CD4-positive, alpha-beta T cell (primary cell): ENCODE measurements at regions of chr2 and their contacts with region 1.

Region 1: DNA sequence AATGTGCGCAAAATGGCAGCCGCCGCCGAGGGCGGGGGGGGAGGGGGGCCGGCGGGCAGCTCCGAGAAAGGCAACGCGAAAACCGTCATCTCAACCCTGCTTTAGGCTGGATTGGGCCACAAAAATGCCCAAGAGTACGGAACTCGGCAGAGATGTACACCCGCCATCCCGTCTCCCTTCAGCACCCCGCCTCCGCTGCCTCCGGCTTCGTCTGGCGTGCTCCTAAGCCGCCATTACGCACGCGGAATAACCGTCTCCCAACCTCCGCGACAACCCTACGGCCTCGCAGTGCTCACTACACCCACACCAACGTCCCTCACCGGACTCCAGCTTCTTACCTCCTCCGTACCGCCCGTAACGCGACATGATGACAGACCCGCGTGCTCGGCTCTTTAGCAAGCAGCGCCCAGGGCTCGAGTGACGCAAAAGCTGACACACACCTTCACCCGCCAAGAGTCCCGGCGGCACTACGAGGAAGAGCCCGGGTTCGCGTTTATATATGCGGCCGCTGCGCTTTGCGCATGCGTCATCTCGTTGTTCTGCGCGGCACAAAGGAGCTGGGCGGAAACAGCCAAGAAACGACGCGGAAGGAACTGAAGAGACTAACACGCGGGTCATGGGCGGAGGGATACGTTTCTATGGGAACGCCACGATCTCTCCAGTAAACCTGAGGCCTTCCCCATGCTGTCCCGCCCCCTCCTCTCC is at the start of gene SRSF7:
- DNase-seq: peak; percentile 96 to 100 (median 99)
- ATAC-seq: peak; percentile 77
- H3K4me3 ChIP-seq: peak within 1 kb of the TSS; percentile 92
- H3K4me3 Mint-ChIP-seq: peak within 1 kb of the TSS; percentile 99
- H3K27ac ChIP-seq: peak within 1 kb of the TSS; percentile 97
- H3K27ac Mint-ChIP-seq: peak within 1 kb of the TSS; percentile 94
- H3K4me1 ChIP-seq: peaks cover 42% of the 10 kb centered on the region
- H3K4me1 Mint-ChIP-seq: peaks cover 63% of the 10 kb centered on the region
- H3K27me3 ChIP-seq: no peaks in the 10 kb centered on the region
- H3K27me3 Mint-ChIP-seq: peaks cover 4% of the 10 kb centered on the region
- CTCF ChIP-seq: no peak
- total RNA-seq, gene SRSF7: 550 to 557 TPM

Region 2: DNA sequence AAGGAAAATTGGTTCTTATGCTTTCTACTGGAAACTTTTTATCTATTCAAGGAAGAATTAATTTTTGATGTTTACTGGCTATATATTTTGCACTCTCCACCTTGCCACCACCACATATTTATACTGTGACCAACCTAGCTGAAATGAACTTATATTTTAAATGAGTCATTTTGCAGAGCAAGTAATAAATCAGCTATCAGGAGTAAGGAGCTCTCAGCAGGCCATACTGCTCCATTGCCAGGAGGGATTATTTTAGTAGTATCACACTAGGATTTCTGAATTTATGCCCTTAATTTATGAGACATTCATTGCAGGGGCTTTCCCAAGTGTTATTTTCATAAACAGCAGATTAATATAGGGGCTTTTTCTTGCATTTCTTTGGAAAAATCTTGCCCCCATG is 549.3 kb before region 1 on chr2:
- CTCF ChIA-PET with region 1: no interaction called
- POLR2A ChIA-PET with region 1: no interaction called
- intact Hi-C with region 1: no loop called
- DNase-seq: no peak
- ATAC-seq: no peak
- H3K4me3 ChIP-seq: no peak overlapping the region
- H3K4me3 Mint-ChIP-seq: no peak overlapping the region
- H3K27ac ChIP-seq: no peak overlapping the region
- H3K27ac Mint-ChIP-seq: no peak overlapping the region
- H3K4me1 ChIP-seq: no peaks in the 10 kb centered on the region
- H3K4me1 Mint-ChIP-seq: no peaks in the 10 kb centered on the region
- H3K27me3 ChIP-seq: peaks cover 4 to 11% of the 10 kb centered on the region in 2 experiments
- H3K27me3 Mint-ChIP-seq: peaks cover 33% of the 10 kb centered on the region
- CTCF ChIP-seq: no peak

Region 3: GRCh38 chr2:38535744-38536506 is 215.1 kb before region 1 on chr2:
- CTCF ChIA-PET with region 1: no interaction called
- POLR2A ChIA-PET with region 1: interaction called, 10 read pairs
- intact Hi-C with region 1: no loop called
- DNase-seq: peak; percentile 55 to 90 (median 76)
- ATAC-seq: peak; percentile 96
- H3K4me3 ChIP-seq: peak overlapping the region; percentile 44
- H3K4me3 Mint-ChIP-seq: no peak overlapping the region
- H3K27ac ChIP-seq: no peak overlapping the region
- H3K27ac Mint-ChIP-seq: no peak overlapping the region
- H3K4me1 ChIP-seq: peaks cover 14% of the 10 kb centered on the region
- H3K4me1 Mint-ChIP-seq: no peaks in the 10 kb centered on the region
- H3K27me3 ChIP-seq: no peaks in the 10 kb centered on the region
- H3K27me3 Mint-ChIP-seq: peaks cover 7% of the 10 kb centered on the region
- CTCF ChIP-seq: peak; percentile 93

Region 4: GRCh38 chr2:38596229-38596628 is 154.8 kb before region 1 on chr2:
- CTCF ChIA-PET with region 1: interaction called, 3 read pairs
- POLR2A ChIA-PET with region 1: interaction called, 136 read pairs
- intact Hi-C with region 1: no loop called
- DNase-seq: peak in 1 of 14 experiments; percentile 16
- ATAC-seq: no peak
- H3K4me3 ChIP-seq: peak overlapping the region; percentile 62
- H3K4me3 Mint-ChIP-seq: peak overlapping the region; percentile 42
- H3K27ac ChIP-seq: peak overlapping the region; percentile 19 to 24
- H3K27ac Mint-ChIP-seq: peak overlapping the region; percentile 76
- H3K4me1 ChIP-seq: peaks cover 30% of the 10 kb centered on the region
- H3K4me1 Mint-ChIP-seq: peaks cover 66% of the 10 kb centered on the region
- H3K27me3 ChIP-seq: no peaks in the 10 kb centered on the region
- H3K27me3 Mint-ChIP-seq: no peaks in the 10 kb centered on the region
- CTCF ChIP-seq: no peak

Region 5: DNA sequence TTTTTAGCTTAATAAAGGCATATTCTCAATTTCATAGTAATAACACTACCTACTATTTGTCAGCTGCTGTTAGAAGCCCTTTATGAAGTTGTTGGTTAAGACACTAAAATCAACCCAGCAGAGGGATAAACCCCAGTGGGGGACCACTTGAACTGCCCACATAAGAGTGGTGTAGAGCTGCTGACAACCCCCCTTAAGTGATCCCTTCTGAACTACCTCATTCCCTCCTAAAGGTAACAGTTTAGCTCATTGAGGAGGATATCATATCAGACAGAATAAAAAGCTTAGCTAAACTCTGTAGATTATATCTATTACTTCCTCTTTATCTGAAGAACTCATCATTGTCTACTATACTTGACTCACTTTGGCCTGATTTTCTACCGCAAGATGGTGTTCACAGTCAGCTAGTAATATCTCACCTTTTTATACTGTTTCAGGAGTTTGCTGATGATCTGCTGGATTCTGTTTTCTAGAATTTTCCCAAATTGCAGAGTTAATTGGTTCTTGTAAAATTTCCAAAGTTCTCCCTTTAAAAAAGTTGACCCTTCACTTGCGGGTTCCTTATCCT is 69.0 kb before region 1 on chr2:
- CTCF ChIA-PET with region 1: interaction called, 4 read pairs
- POLR2A ChIA-PET with region 1: interaction called, 19 read pairs
- intact Hi-C with region 1: no loop called
- DNase-seq: peak in 4 of 14 experiments; percentile 28 to 82 (median 76)
- ATAC-seq: peak; percentile 88
- H3K4me3 ChIP-seq: peak overlapping the region; percentile 31
- H3K4me3 Mint-ChIP-seq: peak overlapping the region; percentile 49
- H3K27ac ChIP-seq: peak overlapping the region; percentile 71 to 78
- H3K27ac Mint-ChIP-seq: peak overlapping the region; percentile 86
- H3K4me1 ChIP-seq: peaks cover 55% of the 10 kb centered on the region
- H3K4me1 Mint-ChIP-seq: peaks cover 50% of the 10 kb centered on the region
- H3K27me3 ChIP-seq: no peaks in the 10 kb centered on the region
- H3K27me3 Mint-ChIP-seq: no peaks in the 10 kb centered on the region
- CTCF ChIP-seq: peak; percentile 23

Region 6: DNA sequence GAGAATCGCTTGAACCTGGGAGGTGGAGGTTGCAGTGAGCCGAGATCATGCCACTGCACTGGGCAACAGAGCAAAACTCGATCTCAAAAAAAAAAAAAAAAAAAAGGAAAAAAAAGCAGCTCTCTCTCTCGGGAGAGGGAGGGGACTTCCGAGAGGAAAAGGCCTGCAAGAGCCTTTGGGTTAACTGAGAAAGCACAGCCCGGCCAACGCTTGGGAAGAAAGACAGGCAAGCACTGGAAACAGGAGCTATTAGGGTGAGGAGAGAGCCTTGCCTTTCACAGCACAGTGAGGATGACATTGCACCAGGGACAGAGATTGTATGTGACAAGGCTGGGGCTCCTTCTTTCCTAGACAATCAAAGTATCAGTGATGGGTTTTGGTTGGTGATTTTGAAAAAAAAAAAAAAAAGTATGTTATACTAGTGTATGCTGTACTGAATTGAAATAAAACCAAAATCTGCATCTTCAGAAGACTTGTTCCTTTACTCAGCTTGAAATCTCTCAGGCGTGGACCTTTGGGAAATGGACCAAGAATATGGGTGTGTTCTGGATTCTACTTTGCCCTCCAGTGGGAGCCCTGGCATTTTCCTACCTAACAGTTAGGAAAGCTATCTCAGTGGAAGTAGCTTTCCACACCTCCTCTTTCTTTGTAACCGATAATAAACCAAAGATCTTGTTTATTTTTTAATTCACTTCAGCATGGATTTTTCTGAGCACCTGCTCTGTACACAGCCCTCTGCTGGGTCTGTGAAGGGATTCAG is 16.6 kb before region 1 on chr2:
- CTCF ChIA-PET with region 1: no interaction called
- POLR2A ChIA-PET with region 1: interaction called, 66 read pairs
- intact Hi-C with region 1: no loop called
- DNase-seq: peak in 1 of 14 experiments; percentile 9
- ATAC-seq: no peak
- H3K4me3 ChIP-seq: no peak overlapping the region
- H3K4me3 Mint-ChIP-seq: no peak overlapping the region
- H3K27ac ChIP-seq: no peak overlapping the region
- H3K27ac Mint-ChIP-seq: no peak overlapping the region
- H3K4me1 ChIP-seq: no peaks in the 10 kb centered on the region
- H3K4me1 Mint-ChIP-seq: peaks cover 20% of the 10 kb centered on the region
- H3K27me3 ChIP-seq: no peaks in the 10 kb centered on the region
- H3K27me3 Mint-ChIP-seq: no peaks in the 10 kb centered on the region
- CTCF ChIP-seq: no peak

Region 7: GRCh38 chr2:38875576-38876367 is 124.7 kb after region 1 on chr2 and contains the starts of genes DHX57 and MORN2:
- CTCF ChIA-PET with region 1: no interaction called
- POLR2A ChIA-PET with region 1: interaction called, 10 read pairs
- intact Hi-C with region 1: no loop called
- DNase-seq: peak; percentile 62 to 87 (median 74)
- ATAC-seq: peak; percentile 92
- H3K4me3 ChIP-seq: peak within 1 kb of the TSS; percentile 91
- H3K4me3 Mint-ChIP-seq: peak within 1 kb of the TSS; percentile 97
- H3K27ac ChIP-seq: peak within 1 kb of the TSS; percentile 32 to 46
- H3K27ac Mint-ChIP-seq: peak within 1 kb of the TSS; percentile 90
- H3K4me1 ChIP-seq: peaks cover 13% of the 10 kb centered on the region
- H3K4me1 Mint-ChIP-seq: peaks cover 26% of the 10 kb centered on the region
- H3K27me3 ChIP-seq: no peaks in the 10 kb centered on the region
- H3K27me3 Mint-ChIP-seq: no peaks in the 10 kb centered on the region
- CTCF ChIP-seq: no peak
- total RNA-seq, gene DHX57: 13.9 to 14.1 TPM
- total RNA-seq, gene MORN2: 2.1 to 2.6 TPM